Gastrocnemius medialis (tissue), 4 donors: ENCODE measurements at regions of chr11 and their contacts with region 1.

Region 1: DNA sequence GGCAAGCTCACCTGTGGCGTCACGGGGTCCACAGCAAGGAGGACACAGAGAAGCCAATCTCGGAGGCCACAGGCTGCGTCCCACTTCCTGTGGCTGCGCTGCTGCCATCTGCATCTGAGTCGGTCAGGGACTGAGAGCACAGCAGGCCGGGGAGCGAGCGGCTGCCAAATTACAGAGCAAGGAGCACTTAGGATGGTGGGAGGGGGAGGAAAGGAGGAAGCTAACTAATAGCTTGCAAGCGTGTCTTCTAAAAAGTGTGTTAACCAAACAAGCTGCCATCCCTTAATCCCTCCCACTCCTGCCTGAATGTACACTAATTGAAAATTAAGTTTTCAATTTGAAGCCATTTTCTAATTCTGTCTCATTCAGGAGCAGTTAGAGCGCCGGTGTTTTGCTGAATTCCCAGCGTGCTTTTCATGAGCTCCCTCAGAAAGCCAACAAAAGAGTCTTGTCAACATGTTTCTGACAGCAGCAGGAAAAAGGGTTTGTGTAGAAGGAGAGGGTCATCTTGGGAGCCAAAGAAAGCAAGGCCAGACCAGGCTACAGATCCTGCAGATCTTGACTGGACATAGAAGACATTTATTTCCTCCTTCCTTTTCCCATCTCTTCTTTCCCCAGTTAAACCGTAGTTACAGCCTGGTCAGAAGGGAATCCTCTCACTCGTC is 42.4 kb upstream of the API5 start:
- DNase-seq: no peak
- ATAC-seq: no peak
- H3K4me3 ChIP-seq: no peak overlapping the region
- H3K27ac ChIP-seq: no peak overlapping the region
- H3K4me1 ChIP-seq: peaks cover 0 to 5% of the 10 kb centered on the region in 2 donors
- H3K27me3 ChIP-seq: no peaks in the 10 kb centered on the region
- CTCF ChIP-seq: no peak
- POLR2A ChIP-seq: no peak

Region 2: DNA sequence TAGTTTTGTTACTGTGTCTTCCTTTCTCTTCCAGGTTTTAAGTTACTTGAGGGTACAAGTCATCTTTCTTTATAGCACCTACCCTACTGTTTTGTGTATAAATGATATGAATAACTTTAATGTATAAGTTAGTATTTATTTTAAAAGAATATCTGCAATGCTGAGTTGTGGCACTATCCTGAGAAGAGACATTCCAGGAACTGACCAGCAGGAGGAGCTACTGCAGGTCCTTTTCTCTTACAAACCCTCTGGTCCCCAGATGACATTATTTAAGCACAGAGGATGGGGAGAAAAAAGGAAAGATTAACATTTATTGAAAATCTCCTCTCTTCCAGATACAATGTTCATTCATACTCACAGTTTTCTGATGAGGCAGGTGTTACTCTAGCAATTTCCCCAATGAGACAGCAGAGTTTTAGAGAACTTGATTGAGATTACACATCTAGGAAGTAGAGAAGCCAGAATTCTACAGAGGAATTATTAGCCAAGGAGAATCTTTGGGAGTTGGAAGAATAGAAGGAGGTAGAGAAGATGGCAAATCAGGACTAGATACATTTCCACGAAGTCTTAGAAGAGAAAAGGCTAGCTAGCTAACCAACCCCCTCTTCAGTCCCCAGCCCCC is 498.8 kb before region 1 on chr11:
- in situ Hi-C with region 1: loop called in 1 of 4 experiments (anchors 25 kb)
- intact Hi-C with region 1: no loop called
- DNase-seq: no peak
- ATAC-seq: no peak
- H3K4me3 ChIP-seq: no peak overlapping the region
- H3K27ac ChIP-seq: no peak overlapping the region
- H3K4me1 ChIP-seq: no peaks in the 10 kb centered on the region
- H3K27me3 ChIP-seq: no peaks in the 10 kb centered on the region
- CTCF ChIP-seq: no peak
- POLR2A ChIP-seq: no peak